ENCODE measurements at regions of chr2 and their contacts with region 1.

Region 1: DNA sequence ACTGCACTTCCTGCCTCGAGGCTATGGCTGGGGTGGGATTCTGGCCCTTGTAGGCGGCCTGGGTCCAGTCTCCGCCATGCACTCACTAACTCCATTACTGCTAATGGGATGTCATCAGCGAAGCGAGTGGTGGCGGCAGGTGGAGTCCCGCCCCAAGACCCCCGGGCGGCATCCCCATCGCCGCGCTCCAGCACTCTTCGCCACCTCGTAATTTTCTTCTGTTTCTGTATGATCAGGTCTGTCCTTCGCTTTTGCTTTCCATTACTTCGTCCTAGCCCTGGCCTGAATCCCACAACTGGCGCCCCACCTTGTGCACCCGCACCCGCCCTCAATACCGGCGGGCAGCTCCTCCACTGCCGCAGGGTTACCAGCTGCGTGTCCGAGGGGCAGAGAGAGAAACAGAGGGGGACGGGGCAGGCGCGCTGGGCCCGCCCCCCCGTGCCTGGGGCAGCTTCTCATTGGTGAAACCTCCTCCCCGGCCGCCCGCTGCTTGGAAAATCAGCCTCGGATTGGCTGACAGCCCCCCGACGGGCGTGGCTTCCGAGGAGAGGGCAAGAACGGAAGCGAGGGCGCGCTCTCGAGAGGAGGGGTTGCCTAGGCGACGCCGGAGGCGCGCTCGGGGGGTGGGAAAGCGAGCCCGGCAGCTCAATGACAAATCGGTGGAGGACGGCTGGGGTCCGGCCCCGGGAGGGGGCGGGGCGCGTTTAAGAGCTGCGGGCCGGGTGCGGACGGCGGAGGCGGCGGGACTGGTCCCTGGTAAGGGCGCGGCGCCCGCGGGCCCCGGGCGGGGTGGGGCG is at the start of gene RALB:
- DNase-seq: peak; percentile 87
- ATAC-seq: peak; percentile 96
- H3K4me3 ChIP-seq: peak within 1 kb of the TSS; percentile 91
- H3K27ac ChIP-seq: peak within 1 kb of the TSS; percentile 51
- H3K4me1 ChIP-seq: peaks cover 7% of the 10 kb centered on the region; the same call in 1 of the 2 replicates
- H3K27me3 ChIP-seq: no peaks in the 10 kb centered on the region
- CTCF ChIP-seq: no peak
- EP300 ChIP-seq: no peak
- POLR2A ChIP-seq: peak; percentile 79
- RAD21 ChIP-seq: no peak
- polyA plus RNA-seq, gene RALB: 8.3 to 15.9 TPM

Region 2: GRCh38 chr2:120223034-120223912 is 29.1 kb before region 1 on chr2 and contains the start of gene TMEM185B:
- CTCF ChIA-PET with region 1: interaction called, 6 read pairs
- POLR2A ChIA-PET with region 1: interaction called, 14 read pairs
- RAD21 ChIA-PET with region 1: interaction called, 9 read pairs
- SMC1A ChIA-PET with region 1: interaction called, 3 read pairs
- in situ Hi-C with region 1: no loop called
- intact Hi-C with region 1: loop called (anchors 1 kb)
- DNase-seq: no peak
- ATAC-seq: peak; percentile 94
- H3K4me3 ChIP-seq: peak within 1 kb of the TSS; percentile 81
- H3K27ac ChIP-seq: peak within 1 kb of the TSS; percentile 83
- H3K4me1 ChIP-seq: peaks cover 22% of the 10 kb centered on the region
- H3K27me3 ChIP-seq: no peaks in the 10 kb centered on the region
- CTCF ChIP-seq: peak; percentile 24 to 50 (median 30); a peak in 5 of 6 replicates
- EP300 ChIP-seq: peak in 1 of 2 experiments; percentile 45; a peak in 1 of 4 replicates
- POLR2A ChIP-seq: peak; percentile 94
- RAD21 ChIP-seq: peak; percentile 33; the same call in 1 of the 2 replicates
- polyA plus RNA-seq, gene TMEM185B: 2.4 to 3.2 TPM

Region 3: DNA sequence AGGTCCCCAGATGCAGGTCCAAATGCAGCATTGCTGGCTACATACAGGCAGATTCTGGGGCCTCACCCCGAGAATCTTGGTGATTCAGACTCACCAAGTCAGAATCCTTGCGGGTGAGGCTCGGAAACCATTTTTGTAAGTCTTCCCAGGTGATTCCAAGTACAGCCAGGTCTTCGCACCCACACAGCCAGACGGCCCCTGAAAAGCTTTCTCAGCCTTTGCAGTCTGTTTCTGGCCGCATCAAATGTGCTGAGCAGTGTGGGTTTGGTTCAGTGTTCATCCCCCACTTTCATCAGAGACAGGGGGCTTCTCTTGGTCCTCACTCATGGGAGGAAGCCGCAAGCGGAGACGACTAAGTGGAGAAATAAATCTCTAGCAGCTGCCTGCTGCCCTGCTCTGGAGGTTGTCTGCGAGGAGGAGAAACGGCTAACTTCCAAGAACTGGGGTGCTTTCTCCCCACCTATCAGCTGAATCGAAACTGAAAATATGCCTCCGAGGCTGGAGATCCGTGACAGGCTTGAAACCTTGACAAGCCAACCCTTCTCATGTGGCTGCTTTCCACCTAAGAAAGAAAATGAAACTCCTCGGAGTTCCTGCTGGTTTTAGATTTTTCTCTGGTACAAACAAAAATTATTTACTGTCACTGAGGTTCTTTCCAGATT is 20.3 kb before region 1 on chr2:
- CTCF ChIA-PET with region 1: interaction called, 9 read pairs
- POLR2A ChIA-PET with region 1: interaction called, 22 read pairs
- RAD21 ChIA-PET with region 1: interaction called, 47 read pairs
- SMC1A ChIA-PET with region 1: interaction called, 35 read pairs
- in situ Hi-C with region 1: no loop called
- intact Hi-C with region 1: loop called (anchors 2 kb)
- DNase-seq: peak; percentile 86
- ATAC-seq: peak; percentile 85
- H3K4me3 ChIP-seq: peak overlapping the region; percentile 89
- H3K27ac ChIP-seq: peak overlapping the region; percentile 97
- H3K4me1 ChIP-seq: peaks cover 18% of the 10 kb centered on the region
- H3K27me3 ChIP-seq: no peaks in the 10 kb centered on the region
- CTCF ChIP-seq: no peak
- EP300 ChIP-seq: peak in 1 of 2 experiments; percentile 37; a peak in 2 of 4 replicates
- POLR2A ChIP-seq: peak; percentile 70
- RAD21 ChIP-seq: no peak

Region 4: DNA sequence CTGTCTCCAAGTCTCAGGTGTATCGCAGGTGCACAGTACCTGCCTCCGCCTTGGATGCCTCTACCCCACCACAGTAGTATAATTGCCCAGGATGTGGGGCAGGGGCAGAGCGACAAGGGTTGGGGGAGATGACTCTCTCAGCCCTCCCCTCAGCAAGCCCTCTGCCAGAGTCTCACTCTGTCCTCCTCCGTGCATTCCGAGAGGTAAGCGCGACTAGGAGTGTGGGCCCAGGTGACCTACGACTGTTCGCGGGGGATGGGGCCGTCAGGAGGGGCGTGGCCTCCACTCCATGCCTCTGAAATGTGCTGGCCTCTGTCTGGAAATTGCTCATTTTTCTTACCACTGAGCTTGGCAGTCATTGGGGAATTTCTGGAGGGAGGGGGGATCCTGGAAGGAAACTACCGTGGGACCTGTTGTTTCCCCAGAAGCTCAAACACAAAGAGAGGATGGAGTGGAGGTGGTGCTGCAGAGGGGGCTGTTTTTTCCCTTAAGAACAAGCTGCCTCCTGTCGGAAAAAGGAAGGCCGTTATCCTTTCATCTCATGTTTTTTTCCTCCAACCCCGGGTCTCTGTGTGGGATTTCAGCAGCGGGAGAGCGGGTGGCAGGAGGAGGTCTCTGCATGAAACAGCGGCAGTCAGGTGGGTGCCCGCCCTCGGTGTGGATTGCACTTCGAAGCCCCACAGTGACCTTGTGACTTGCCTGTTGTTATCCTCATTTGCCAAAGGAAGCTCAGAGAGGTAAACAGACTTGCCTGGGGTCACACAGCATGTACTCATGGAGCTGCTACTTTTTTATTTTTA is 12.7 kb before region 1 on chr2:
- CTCF ChIA-PET with region 1: interaction called, 3 read pairs
- POLR2A ChIA-PET with region 1: interaction called, 22 read pairs
- RAD21 ChIA-PET with region 1: interaction called, 4 read pairs
- SMC1A ChIA-PET with region 1: interaction called, 35 read pairs
- in situ Hi-C with region 1: no loop called
- intact Hi-C with region 1: no loop called
- DNase-seq: no peak
- ATAC-seq: no peak; the same call in 2 of the 3 replicates
- H3K4me3 ChIP-seq: no peak overlapping the region
- H3K27ac ChIP-seq: no peak overlapping the region
- H3K4me1 ChIP-seq: no peaks in the 10 kb centered on the region; the same call in 1 of the 2 replicates
- H3K27me3 ChIP-seq: no peaks in the 10 kb centered on the region
- CTCF ChIP-seq: no peak
- EP300 ChIP-seq: no peak
- POLR2A ChIP-seq: no peak
- RAD21 ChIP-seq: no peak

Region 5: DNA sequence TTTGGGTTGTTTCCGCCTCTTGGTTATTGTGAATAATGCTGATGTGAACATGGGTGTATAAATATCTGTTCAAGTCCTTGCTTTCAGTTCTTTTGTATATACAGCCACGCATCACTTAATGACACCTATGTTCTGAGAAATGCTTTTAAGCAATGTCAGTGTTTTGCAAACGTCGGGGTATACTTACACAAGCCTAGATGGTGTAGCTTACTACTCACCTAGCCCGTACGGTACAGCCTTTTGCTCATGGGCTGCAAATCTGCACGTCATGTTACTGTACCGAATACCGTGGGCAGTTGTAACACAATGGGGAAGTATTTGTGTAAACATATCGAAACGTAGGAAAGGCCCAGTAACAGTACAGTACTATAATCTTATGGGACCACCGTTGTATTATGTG is 12.6 kb after region 1 on chr2:
- CTCF ChIA-PET with region 1: interaction called, 7 read pairs
- POLR2A ChIA-PET with region 1: interaction called, 4 read pairs
- RAD21 ChIA-PET with region 1: interaction called, 4 read pairs
- SMC1A ChIA-PET with region 1: interaction called, 25 read pairs
- in situ Hi-C with region 1: no loop called
- intact Hi-C with region 1: no loop called
- DNase-seq: no peak
- ATAC-seq: peak; percentile 75
- H3K4me3 ChIP-seq: peak overlapping the region; percentile 2; the same call in 1 of the 2 replicates
- H3K27ac ChIP-seq: no peak overlapping the region
- H3K4me1 ChIP-seq: peaks cover 17% of the 10 kb centered on the region
- H3K27me3 ChIP-seq: no peaks in the 10 kb centered on the region
- CTCF ChIP-seq: no peak
- EP300 ChIP-seq: no peak
- POLR2A ChIP-seq: no peak
- RAD21 ChIP-seq: no peak

Region 6: GRCh38 chr2:120287183-120288015 is 35.0 kb after region 1 on chr2:
- CTCF ChIA-PET with region 1: interaction called, 10 read pairs
- POLR2A ChIA-PET with region 1: interaction called, 4 read pairs
- RAD21 ChIA-PET with region 1: interaction called, 23 read pairs
- SMC1A ChIA-PET with region 1: interaction called, 15 read pairs
- in situ Hi-C with region 1: no loop called
- intact Hi-C with region 1: loop called (anchors 2 kb)
- DNase-seq: peak; percentile 80
- ATAC-seq: peak; percentile 98
- H3K4me3 ChIP-seq: peak overlapping the region; percentile 42
- H3K27ac ChIP-seq: peak overlapping the region; percentile 98
- H3K4me1 ChIP-seq: peaks cover 17% of the 10 kb centered on the region
- H3K27me3 ChIP-seq: no peaks in the 10 kb centered on the region
- CTCF ChIP-seq: no peak
- EP300 ChIP-seq: peak; percentile 78 to 92
- POLR2A ChIP-seq: peak; percentile 58
- RAD21 ChIP-seq: no peak; the same call in 1 of the 2 replicates

Region 7: DNA sequence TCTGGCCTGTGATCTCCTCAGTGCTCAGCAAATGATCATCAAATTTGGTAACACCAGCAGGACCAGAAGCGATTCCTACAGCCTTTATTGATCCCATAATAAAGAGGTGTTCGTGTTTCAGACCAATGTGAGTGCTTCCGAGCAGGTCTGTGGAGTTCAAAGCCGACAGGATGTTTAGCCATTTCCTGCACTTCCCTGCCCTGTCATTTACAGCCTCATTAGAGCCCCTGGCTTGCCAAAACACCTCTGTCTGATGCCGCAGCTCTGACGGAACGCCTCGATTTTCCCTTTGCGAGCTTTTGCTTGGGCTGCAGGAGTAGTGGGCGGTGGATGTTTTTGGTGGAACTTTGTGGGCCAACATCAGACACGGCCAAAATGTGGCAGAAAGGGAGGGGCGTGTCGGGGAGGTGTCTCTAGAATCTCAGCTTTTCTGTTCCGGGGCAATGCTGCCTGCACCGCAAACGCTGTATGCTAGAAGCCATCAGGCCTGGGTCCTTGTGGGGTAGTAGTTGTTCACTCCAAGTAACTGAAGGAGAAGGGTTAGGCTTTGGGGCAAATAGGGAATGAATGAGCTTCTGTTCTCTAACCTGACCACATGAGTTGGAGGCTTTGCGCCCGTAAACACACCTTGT is 67.4 kb after region 1 on chr2:
- CTCF ChIA-PET with region 1: no interaction called
- POLR2A ChIA-PET with region 1: no interaction called
- RAD21 ChIA-PET with region 1: no interaction called
- SMC1A ChIA-PET with region 1: no interaction called
- in situ Hi-C with region 1: no loop called
- intact Hi-C with region 1: no loop called
- DNase-seq: no peak
- ATAC-seq: no peak
- H3K4me3 ChIP-seq: no peak overlapping the region
- H3K27ac ChIP-seq: no peak overlapping the region
- H3K4me1 ChIP-seq: no peaks in the 10 kb centered on the region
- H3K27me3 ChIP-seq: peaks cover 0 to 3% of the 10 kb centered on the region in 2 experiments; a peak in 2 of 4 replicates
- CTCF ChIP-seq: no peak
- EP300 ChIP-seq: no peak
- POLR2A ChIP-seq: no peak
- RAD21 ChIP-seq: no peak